Activated CD4-positive, alpha-beta T cell treated with anti-CD3 and anti-CD28 coated beads, Interleukin-2, amount 10 ng/mL, durations not matched to agents 24 days and 14 days (primary cell): ENCODE measurements at regions of chr6 and their contacts with region 1.

Region 1: DNA sequence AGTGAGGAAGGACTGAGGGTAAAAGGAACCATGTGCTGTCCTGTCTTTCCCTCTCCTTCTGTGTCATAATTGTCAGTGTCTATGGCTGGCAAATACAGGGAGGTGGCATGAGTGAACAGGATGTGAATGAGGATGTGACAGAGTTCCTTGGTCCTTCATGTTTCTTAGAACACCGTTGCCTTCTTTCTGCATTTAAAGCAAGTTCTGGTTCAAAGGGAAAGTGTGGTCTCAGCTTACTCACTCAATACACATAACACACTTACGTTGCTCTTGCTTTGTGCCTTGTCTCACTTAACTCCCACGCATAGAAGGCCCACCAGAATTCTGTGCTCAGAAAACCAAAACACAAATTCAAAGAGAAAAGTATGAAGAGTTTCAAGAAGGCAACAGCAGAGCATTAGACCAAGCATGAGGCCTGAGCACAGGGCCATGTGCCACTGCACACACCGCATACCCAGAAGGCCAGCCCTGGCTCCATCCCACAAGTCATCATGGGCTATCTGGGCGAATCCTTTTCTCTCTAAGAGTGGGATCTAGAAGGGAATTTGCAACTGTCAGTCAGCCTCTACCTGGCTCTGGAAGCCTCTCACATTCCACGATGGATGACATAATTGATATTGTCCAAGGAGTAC is 38.9 kb upstream of the SAYSD1 start:
- DNase-seq: peak; percentile 71
- H3K4me3 Mint-ChIP-seq: no peak overlapping the region
- H3K27ac Mint-ChIP-seq: peak overlapping the region; percentile 83
- H3K4me1 Mint-ChIP-seq: peaks cover 22% of the 10 kb centered on the region
- H3K27me3 Mint-ChIP-seq: peaks cover 4% of the 10 kb centered on the region

Region 2: DNA sequence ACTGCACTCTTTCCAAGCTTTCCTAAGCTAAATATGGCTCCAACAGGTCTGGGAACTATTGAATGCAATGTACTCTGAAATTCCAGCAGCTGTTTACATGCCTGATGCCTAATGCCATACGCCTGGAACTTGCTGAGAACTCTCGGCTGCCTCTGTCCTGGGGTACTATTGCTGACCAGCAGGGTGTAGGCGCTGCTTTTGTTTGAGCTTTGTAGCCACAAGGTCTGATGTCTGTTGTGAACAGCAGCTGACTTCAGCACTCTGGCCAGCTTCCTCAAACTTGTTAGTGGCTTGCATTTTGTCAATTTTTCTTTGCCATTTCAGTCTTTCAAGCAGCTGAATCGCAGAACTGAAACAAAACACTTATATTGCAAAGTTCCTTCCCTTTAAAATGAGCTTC is 65.6 kb before region 1 on chr6:
- intact Hi-C with region 1: loop called (anchors 10 kb)
- DNase-seq: peak; percentile 69
- H3K4me3 Mint-ChIP-seq: no peak overlapping the region
- H3K27ac Mint-ChIP-seq: no peak overlapping the region
- H3K4me1 Mint-ChIP-seq: peaks cover 18% of the 10 kb centered on the region
- H3K27me3 Mint-ChIP-seq: peaks cover 63% of the 10 kb centered on the region

Region 3: GRCh38 chr6:40097590-40097989 is 943.7 kb after region 1 on chr6:
- intact Hi-C with region 1: no loop called
- DNase-seq: no peak
- H3K4me3 Mint-ChIP-seq: no peak overlapping the region
- H3K27ac Mint-ChIP-seq: no peak overlapping the region
- H3K4me1 Mint-ChIP-seq: no peaks in the 10 kb centered on the region
- H3K27me3 Mint-ChIP-seq: no peaks in the 10 kb centered on the region